Activated B cell treated with CpG ODN at 0.5 μM for 24 hours (primary cell): ENCODE measurements at regions of chr12 and their contacts with region 1.

Region 1: GRCh38 chr12:68610370-68611093 is at the start of gene RAP1B:
- DNase-seq: peak; percentile 82
- ATAC-seq: peak; percentile 82
- H3K4me3 Mint-ChIP-seq: peak within 1 kb of the TSS; percentile 95
- H3K27ac Mint-ChIP-seq: peak within 1 kb of the TSS; percentile 99
- H3K4me1 Mint-ChIP-seq: peaks cover 48% of the 10 kb centered on the region
- H3K27me3 Mint-ChIP-seq: no peaks in the 10 kb centered on the region
- CTCF ChIP-seq: no peak
- total RNA-seq, gene RAP1B: 136 and 142 TPM in 2 replicates

Region 2: DNA sequence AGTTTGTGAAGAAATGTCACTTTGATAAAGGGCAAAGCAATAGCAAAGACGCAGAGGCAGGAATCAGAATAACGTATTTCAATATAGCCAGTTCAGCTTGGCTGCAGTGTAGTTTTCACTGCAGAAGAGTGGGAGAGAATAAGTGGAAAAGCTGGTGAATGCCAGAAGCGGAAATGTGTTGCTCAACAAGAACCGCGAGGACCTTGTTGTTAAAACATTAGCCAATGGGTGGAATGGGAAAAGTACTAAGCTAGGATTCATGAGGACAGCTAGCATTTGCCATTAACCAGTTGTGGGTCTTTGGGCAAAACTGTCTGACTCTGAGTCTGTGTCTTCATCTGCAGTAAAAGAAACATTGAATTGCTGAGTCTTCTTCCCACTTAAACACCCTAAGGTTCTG is 1638.7 kb before region 1 on chr12:
- CTCF ChIA-PET with region 1: no interaction called
- POLR2A ChIA-PET with region 1: no interaction called
- intact Hi-C with region 1: no loop called
- DNase-seq: no peak
- ATAC-seq: no peak
- H3K4me3 Mint-ChIP-seq: no peak overlapping the region
- H3K27ac Mint-ChIP-seq: no peak overlapping the region
- H3K4me1 Mint-ChIP-seq: no peaks in the 10 kb centered on the region
- H3K27me3 Mint-ChIP-seq: peaks cover 7% of the 10 kb centered on the region
- CTCF ChIP-seq: no peak

Region 3: DNA sequence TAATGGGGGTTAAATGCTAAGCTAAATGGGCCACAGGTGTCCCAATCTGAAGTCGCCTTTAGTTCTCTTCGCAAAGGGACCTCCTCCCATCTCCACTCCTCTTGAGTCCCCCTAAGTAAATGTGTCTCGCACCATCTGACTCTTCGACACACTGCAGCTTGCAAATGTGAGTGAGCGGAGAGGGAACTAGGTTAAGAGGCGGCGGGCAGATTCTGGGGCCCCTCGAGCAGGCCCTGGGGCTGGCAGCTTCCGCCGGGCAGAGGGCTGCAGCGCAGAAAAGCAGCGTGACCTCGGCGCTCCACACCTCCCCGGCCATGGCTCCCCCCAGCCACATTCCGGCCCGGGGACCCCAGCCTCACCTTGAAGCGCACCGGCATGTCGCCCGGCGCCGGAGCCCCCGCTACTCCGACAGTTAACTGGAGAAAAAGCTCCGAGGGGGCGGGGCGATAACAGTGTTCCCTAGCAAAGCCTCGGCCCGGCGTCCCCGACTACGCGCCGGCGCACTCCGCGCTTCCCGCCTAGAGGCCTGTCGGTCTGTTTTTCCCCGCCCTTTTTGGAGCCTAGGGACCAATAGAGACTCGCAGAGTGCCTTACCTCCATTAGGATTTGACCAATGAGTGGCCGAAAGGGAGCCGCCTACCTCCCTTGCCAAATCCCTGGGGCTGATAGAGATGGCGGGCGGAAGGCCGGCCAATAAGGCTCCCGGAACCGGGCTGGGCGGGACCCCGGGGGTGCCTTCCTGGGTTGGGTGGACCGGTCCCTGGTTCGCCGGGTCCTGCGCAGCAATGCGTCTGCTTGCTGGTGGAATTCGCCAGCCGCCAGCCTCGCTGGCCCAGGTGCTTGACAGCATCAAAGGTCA is 278.4 kb before region 1 on chr12 and contains the start of gene MDM1:
- CTCF ChIA-PET with region 1: no interaction called
- POLR2A ChIA-PET with region 1: interaction called, 12 read pairs
- intact Hi-C with region 1: loop called (anchors 1 kb)
- DNase-seq: peak; percentile 92
- ATAC-seq: peak; percentile 97
- H3K4me3 Mint-ChIP-seq: peak within 1 kb of the TSS; percentile 89
- H3K27ac Mint-ChIP-seq: peak within 1 kb of the TSS; percentile 87
- H3K4me1 Mint-ChIP-seq: peaks cover 27% of the 10 kb centered on the region
- H3K27me3 Mint-ChIP-seq: no peaks in the 10 kb centered on the region
- CTCF ChIP-seq: no peak
- total RNA-seq, gene MDM1: 24.5 and 25.9 TPM in 2 replicates

Region 4: GRCh38 chr12:68451261-68452077 is 159.1 kb before region 1 on chr12:
- CTCF ChIA-PET with region 1: no interaction called
- POLR2A ChIA-PET with region 1: interaction called, 6 read pairs
- intact Hi-C with region 1: loop called (anchors 1 kb)
- DNase-seq: peak; percentile 22
- ATAC-seq: peak; percentile 78
- H3K4me3 Mint-ChIP-seq: peak overlapping the region; percentile 76
- H3K27ac Mint-ChIP-seq: peak overlapping the region; percentile 85
- H3K4me1 Mint-ChIP-seq: peaks cover 94% of the 10 kb centered on the region
- H3K27me3 Mint-ChIP-seq: no peaks in the 10 kb centered on the region
- CTCF ChIP-seq: no peak

Region 5: DNA sequence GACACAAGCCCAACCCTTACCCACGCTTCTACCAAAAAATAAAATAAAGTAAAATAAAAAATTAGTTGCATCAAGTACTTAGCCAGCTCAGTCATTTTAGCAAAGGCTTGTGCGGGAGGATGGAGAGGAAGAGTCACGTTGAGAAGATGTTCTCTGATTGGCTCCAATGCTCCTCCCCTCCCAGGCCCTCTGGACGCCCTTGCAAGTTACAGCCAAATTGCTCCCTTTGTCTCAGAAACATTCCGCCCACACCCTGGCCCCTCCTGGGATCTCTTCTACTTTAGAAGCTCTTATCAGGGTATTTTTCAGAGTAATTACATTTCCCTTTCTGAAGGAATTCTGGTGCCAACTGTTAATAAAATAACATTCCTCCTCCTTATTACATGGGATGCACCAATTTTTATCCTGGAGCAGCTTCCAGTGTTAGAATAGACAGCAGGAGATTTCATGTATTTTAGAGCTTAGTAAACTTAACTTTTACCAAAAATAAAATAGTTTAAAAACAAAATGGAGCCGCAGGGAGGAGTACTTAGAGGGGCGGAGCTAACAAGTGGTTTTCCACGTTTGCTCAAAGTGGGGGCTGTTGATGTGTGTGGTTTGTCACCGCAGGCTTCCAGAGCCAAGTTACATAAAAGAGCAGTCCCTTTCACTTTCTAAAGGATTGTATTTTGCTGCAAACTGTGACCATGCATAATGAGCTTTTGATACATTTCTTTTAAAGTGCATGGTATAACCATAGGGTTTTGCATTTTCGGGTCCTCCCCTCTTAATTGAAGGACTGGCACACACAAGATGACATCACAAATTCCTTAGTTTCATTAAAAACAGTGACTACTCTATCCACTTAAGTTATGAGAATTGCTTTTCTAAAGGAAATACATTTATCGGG is 71.6 kb before region 1 on chr12:
- CTCF ChIA-PET with region 1: no interaction called
- POLR2A ChIA-PET with region 1: no interaction called
- intact Hi-C with region 1: no loop called
- DNase-seq: no peak
- ATAC-seq: peak; percentile 37
- H3K4me3 Mint-ChIP-seq: no peak overlapping the region
- H3K27ac Mint-ChIP-seq: no peak overlapping the region
- H3K4me1 Mint-ChIP-seq: peaks cover 17% of the 10 kb centered on the region
- H3K27me3 Mint-ChIP-seq: no peaks in the 10 kb centered on the region
- CTCF ChIP-seq: no peak

Region 6: DNA sequence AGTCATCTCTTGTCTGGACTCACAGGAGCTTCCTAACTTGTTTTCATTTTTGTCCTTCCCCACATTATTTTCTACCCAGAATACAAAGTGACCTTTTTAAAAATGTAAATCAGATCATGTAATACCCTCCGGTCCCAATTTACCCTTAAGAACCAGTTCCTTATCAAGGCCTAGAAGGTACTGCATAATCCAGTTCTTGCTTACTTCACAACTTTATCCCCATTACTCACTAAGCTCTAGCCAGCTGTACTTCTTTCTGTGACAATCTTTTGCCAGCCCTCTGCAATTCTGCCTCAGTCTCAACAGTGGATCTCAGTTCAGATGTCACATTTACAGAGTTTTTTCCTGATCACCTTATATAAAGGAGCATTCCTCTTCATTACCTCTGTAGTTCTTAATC is 11.7 kb after region 1 on chr12:
- CTCF ChIA-PET with region 1: no interaction called
- POLR2A ChIA-PET with region 1: interaction called, 17 read pairs
- intact Hi-C with region 1: loop called (anchors 1 kb)
- DNase-seq: no peak
- ATAC-seq: peak; percentile 47
- H3K4me3 Mint-ChIP-seq: peak overlapping the region; percentile 60
- H3K27ac Mint-ChIP-seq: peak overlapping the region; percentile 75
- H3K4me1 Mint-ChIP-seq: peaks cover 88% of the 10 kb centered on the region
- H3K27me3 Mint-ChIP-seq: no peaks in the 10 kb centered on the region
- CTCF ChIP-seq: no peak

Region 7: GRCh38 chr12:68686595-68687521 is 76.3 kb after region 1 on chr12 and contains the start of gene NUP107:
- CTCF ChIA-PET with region 1: no interaction called
- POLR2A ChIA-PET with region 1: interaction called, 10 read pairs
- intact Hi-C with region 1: loop called (anchors 1 kb)
- DNase-seq: peak; percentile 93
- ATAC-seq: peak; percentile 97
- H3K4me3 Mint-ChIP-seq: peak within 1 kb of the TSS; percentile 98
- H3K27ac Mint-ChIP-seq: peak within 1 kb of the TSS; percentile 97
- H3K4me1 Mint-ChIP-seq: peaks cover 33% of the 10 kb centered on the region
- H3K27me3 Mint-ChIP-seq: no peaks in the 10 kb centered on the region
- CTCF ChIP-seq: no peak
- total RNA-seq, gene NUP107: 75.0 and 90.8 TPM in 2 replicates